CD8-positive, alpha-beta T cell (primary cell): ENCODE measurements at regions of chr17 and their contacts with region 1.

Region 1: DNA sequence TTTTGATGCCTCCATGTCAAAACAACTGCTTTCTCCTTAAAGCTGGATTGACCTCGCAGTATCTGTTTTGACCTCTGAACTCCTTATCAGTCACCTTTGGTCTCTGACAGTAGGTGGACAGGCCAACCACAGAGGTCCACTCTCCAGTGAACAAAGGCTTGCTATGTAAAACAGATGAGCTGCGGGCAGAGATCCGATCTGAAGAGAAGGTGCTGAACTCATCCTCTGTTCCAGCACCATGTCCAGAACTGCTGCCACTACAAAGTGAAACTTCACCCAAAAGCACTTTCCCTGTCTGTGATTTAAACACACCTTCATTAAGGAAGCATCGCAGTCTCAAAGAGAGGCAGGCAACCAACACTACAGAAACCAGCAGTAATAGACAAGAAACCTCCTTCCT is 117.3 kb upstream of the CORO6 start:
- DNase-seq: peak in 1 of 9 experiments; percentile 30
- ATAC-seq: peak; percentile 22
- H3K4me3 ChIP-seq: no peak overlapping the region
- H3K4me3 Mint-ChIP-seq: peak overlapping the region; percentile 15
- H3K27ac ChIP-seq: peak overlapping the region in 1 of 2 experiments; percentile 54
- H3K27ac Mint-ChIP-seq: peak overlapping the region; percentile 87
- H3K4me1 ChIP-seq: peaks cover 30% of the 10 kb centered on the region
- H3K4me1 Mint-ChIP-seq: peaks cover 57% of the 10 kb centered on the region
- H3K27me3 ChIP-seq: no peaks in the 10 kb centered on the region
- H3K27me3 Mint-ChIP-seq: no peaks in the 10 kb centered on the region
- CTCF ChIP-seq: no peak

Region 2: GRCh38 chr17:29705386-29705785 is 34.6 kb before region 1 on chr17:
- CTCF ChIA-PET with region 1: no interaction called
- POLR2A ChIA-PET with region 1: interaction called, 4 read pairs
- intact Hi-C with region 1: loop called (anchors 2 to 5 kb)
- DNase-seq: peak in 2 of 9 experiments; percentile 29 to 58
- ATAC-seq: peak; percentile 16
- H3K4me3 ChIP-seq: peak overlapping the region; percentile 1 to 9
- H3K4me3 Mint-ChIP-seq: peak overlapping the region; percentile 66
- H3K27ac ChIP-seq: peak overlapping the region; percentile 62 to 91
- H3K27ac Mint-ChIP-seq: peak overlapping the region; percentile 99
- H3K4me1 ChIP-seq: peaks cover 37% of the 10 kb centered on the region
- H3K4me1 Mint-ChIP-seq: peaks cover 58% of the 10 kb centered on the region
- H3K27me3 ChIP-seq: no peaks in the 10 kb centered on the region
- H3K27me3 Mint-ChIP-seq: no peaks in the 10 kb centered on the region
- CTCF ChIP-seq: no peak

Region 3: DNA sequence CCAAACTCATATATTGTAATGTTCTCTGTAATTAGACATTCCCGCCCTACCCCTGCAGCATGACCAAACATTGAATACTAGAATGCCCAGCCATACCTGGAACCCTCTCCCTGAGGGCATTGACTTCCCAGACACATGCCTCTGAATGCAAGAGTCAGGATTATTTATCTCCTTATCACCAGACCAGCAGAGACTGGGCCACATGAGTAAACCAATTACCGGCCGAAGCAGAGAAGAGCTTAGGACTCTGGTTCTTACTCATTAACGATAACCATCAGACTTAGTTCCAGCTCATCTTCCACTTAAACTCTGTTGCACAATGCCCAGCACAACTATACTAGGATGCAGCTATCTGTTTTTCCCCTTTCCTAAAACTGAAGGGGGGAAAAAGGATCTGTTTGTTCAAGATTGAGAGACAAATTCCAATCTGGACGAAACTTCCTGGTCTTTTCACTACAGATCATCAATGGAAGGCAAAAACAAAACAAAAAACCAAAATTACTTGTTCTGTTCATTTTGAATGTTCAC is 29.1 kb before region 1 on chr17:
- CTCF ChIA-PET with region 1: no interaction called
- POLR2A ChIA-PET with region 1: interaction called, 4 read pairs
- intact Hi-C with region 1: loop called in 1 of 2 experiments (anchors 5 kb)
- DNase-seq: no peak
- ATAC-seq: no peak
- H3K4me3 ChIP-seq: no peak overlapping the region
- H3K4me3 Mint-ChIP-seq: no peak overlapping the region
- H3K27ac ChIP-seq: no peak overlapping the region
- H3K27ac Mint-ChIP-seq: peak overlapping the region; percentile 84
- H3K4me1 ChIP-seq: peaks cover 36% of the 10 kb centered on the region
- H3K4me1 Mint-ChIP-seq: peaks cover 73% of the 10 kb centered on the region
- H3K27me3 ChIP-seq: no peaks in the 10 kb centered on the region
- H3K27me3 Mint-ChIP-seq: no peaks in the 10 kb centered on the region
- CTCF ChIP-seq: no peak

Region 4: DNA sequence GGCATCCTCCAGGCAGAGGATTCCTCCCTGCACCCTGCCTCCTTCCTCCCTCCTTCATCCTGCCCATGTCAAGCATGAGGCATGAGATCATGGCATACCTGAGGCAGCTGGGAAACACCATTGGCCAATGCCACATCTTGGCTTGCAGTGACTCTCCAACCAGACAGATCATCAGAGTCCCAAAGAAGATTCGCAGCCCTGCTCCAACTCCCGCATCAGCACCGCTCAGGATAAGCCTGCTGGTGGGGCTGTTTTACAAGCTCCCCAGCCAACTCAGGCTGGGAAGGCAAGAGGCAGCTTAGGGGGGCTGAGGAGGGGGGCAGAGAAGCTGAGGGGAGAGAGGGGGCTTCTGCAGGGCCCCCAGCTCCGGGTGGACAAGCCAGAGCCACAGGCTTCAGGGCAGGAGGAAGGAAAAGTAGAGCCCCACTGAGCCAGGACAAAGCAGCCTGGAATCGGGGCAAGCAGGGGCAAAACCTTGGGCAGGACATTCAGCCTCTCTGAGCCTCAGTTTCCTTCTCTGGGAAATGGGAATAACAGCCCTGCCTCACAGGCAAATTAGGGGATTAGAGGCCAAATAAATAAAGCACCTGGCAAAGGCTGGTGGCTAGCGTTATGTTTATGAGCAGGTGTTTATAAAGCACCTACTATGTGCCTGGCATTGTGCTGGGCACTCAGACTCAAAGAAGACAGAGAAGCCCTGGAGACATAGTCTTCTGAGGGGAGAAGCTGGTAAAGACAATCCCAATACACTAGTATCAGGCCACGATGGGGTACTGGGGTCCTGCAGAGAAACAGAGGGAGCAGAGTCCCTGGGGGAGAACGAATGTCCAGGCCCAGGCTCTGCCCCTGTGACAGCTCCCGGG is 825.3 kb after region 1 on chr17:
- CTCF ChIA-PET with region 1: no interaction called
- POLR2A ChIA-PET with region 1: no interaction called
- intact Hi-C with region 1: no loop called
- DNase-seq: peak in 1 of 9 experiments; percentile 25
- ATAC-seq: no peak
- H3K4me3 ChIP-seq: no peak overlapping the region
- H3K4me3 Mint-ChIP-seq: no peak overlapping the region
- H3K27ac ChIP-seq: no peak overlapping the region
- H3K27ac Mint-ChIP-seq: no peak overlapping the region
- H3K4me1 ChIP-seq: no peaks in the 10 kb centered on the region
- H3K4me1 Mint-ChIP-seq: no peaks in the 10 kb centered on the region
- H3K27me3 ChIP-seq: no peaks in the 10 kb centered on the region
- H3K27me3 Mint-ChIP-seq: peaks cover 5% of the 10 kb centered on the region
- CTCF ChIP-seq: no peak